CD4-positive, alpha-beta memory T cell (primary cell): ENCODE measurements at regions of chr2 and their contacts with region 1.

Region 1: GRCh38 chr2:176001916-176002687 is at the start of gene LNPK:
- DNase-seq: peak; percentile 88 to 95 (median 92)
- H3K4me3 ChIP-seq: peak within 1 kb of the TSS; percentile 76 to 77
- H3K4me3 Mint-ChIP-seq: peak within 1 kb of the TSS; percentile 81 to 94 (median 90)
- H3K27ac ChIP-seq: peak within 1 kb of the TSS; percentile 74
- H3K27ac Mint-ChIP-seq: peak within 1 kb of the TSS; percentile 61 to 98 (median 91)
- H3K4me1 ChIP-seq: peaks cover 16% of the 10 kb centered on the region
- H3K4me1 Mint-ChIP-seq: peaks cover 12 to 33% (median 17%) of the 10 kb centered on the region in 4 donors
- H3K27me3 ChIP-seq: no peaks in the 10 kb centered on the region
- H3K27me3 Mint-ChIP-seq: no peaks in the 10 kb centered on the region
- total RNA-seq, gene LNPK: 30.4 to 31.3 TPM

Region 2: DNA sequence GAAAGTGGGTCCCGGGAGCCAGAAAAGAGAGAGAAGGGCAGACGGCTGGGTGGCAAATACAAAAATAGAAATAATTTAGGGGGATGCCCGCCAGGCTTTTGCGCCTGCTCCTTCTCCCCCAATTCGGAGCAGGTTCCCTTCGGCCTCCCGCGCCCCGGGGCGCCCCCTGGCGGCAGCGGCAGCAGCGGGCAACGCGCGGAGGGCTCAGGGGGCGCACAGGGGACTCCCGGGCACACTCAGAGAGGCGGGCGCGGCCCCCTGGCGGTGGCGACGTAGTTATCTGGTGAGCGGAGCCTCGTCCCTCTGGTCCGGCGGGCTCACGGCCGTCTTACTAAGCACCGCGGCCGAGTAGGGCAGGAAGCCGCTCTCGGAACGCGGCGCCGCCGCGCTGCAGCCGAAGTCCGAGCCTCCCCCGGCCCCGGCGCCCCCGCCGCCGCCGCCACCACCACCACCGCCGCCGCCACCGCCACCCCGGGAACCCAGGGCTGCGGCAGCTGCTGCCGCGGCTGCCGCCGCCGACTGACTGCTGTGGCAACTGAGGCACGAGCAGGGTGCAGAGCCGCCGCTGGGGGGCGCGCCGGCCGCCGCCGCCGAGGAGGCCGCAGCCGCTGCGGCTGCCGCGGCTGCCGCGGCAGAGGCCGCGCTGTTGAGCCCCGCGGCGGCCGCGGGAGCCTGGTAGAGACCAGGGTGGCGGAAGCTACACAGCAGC is 77.9 kb after region 1 on chr2:
- CTCF ChIA-PET with region 1: no interaction called
- POLR2A ChIA-PET with region 1: no interaction called
- intact Hi-C with region 1: loop called (anchors 5 kb)
- DNase-seq: peak in 1 of 5 donors; percentile 24
- H3K4me3 ChIP-seq: no peak overlapping the region
- H3K4me3 Mint-ChIP-seq: peak overlapping the region in 6 of 8 donors; percentile 64 to 82 (median 72)
- H3K27ac ChIP-seq: no peak overlapping the region
- H3K27ac Mint-ChIP-seq: peak overlapping the region in 4 of 7 donors; percentile 90 to 95 (median 92)
- H3K4me1 ChIP-seq: no peaks in the 10 kb centered on the region
- H3K4me1 Mint-ChIP-seq: peaks cover 3 to 24% (median 9%) of the 10 kb centered on the region in 4 donors
- H3K27me3 ChIP-seq: peaks cover 85% of the 10 kb centered on the region
- H3K27me3 Mint-ChIP-seq: peaks cover 62 to 63% of the 10 kb centered on the region in 2 donors

Region 3: DNA sequence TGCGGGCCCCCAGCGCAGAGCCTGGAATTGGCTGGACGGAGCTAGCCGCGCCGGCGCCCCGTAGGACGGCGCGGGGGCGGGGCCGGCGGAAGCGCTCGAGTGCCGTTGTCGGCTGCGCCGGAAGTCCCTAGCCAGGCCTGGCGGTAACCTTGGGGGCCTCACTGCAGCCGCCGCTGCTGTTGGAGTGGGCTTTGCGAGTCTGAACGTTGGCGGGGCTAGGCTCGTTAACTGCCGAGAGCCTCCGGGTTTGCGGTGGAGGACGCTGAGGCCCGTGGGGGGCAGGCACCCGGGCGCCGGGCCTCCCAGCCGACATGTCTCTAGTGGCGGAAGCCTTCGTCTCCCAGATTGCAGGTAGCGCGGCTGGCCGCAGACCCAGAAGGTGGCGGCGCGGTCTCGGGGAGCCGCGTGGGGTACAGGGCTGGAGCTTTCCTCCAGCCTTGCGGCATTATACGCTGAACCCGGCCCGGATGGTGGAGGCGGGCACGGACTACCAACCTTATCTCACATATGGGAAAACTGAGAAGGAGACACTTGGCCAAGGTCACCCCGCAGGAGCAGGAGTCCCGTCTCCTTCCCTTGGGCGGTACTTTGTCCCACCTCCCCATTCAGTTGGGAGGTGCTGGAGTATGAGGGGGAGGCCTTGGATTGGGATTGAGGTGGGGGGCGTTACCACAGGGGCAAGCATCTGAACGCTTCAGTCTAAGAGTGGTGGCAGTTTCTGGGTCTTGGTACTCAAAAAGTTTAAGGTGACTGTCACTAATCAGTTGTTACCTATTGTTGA is 267.4 kb after region 1 on chr2 and contains the start of gene MTX2:
- CTCF ChIA-PET with region 1: no interaction called
- POLR2A ChIA-PET with region 1: no interaction called
- intact Hi-C with region 1: loop called (anchors 10 kb)
- DNase-seq: peak; percentile 65 to 80 (median 75)
- H3K4me3 ChIP-seq: peak within 1 kb of the TSS; percentile 88 to 93
- H3K4me3 Mint-ChIP-seq: peak within 1 kb of the TSS; percentile 95 to 99 (median 98)
- H3K27ac ChIP-seq: peak within 1 kb of the TSS; percentile 50
- H3K27ac Mint-ChIP-seq: peak within 1 kb of the TSS; percentile 86 to 95 (median 89)
- H3K4me1 ChIP-seq: peaks cover 13% of the 10 kb centered on the region
- H3K4me1 Mint-ChIP-seq: peaks cover 12 to 39% (median 16%) of the 10 kb centered on the region in 4 donors
- H3K27me3 ChIP-seq: no peaks in the 10 kb centered on the region
- H3K27me3 Mint-ChIP-seq: peaks cover 4 to 5% of the 10 kb centered on the region in 2 donors
- total RNA-seq, gene MTX2: 7.6 to 8.1 TPM

Region 4: GRCh38 chr2:177552422-177553175 is 1550.5 kb after region 1 on chr2:
- CTCF ChIA-PET with region 1: no interaction called
- POLR2A ChIA-PET with region 1: no interaction called
- intact Hi-C with region 1: loop called (anchors 5 kb)
- DNase-seq: peak; percentile 94 to 96 (median 96)
- H3K4me3 ChIP-seq: peak overlapping the region; percentile 57 to 90
- H3K4me3 Mint-ChIP-seq: peak overlapping the region; percentile 95 to 99 (median 98)
- H3K27ac ChIP-seq: peak overlapping the region; percentile 97
- H3K27ac Mint-ChIP-seq: peak overlapping the region; percentile 98 to 100 (median 100)
- H3K4me1 ChIP-seq: peaks cover 9% of the 10 kb centered on the region
- H3K4me1 Mint-ChIP-seq: peaks cover 6 to 20% (median 8%) of the 10 kb centered on the region in 4 donors
- H3K27me3 ChIP-seq: no peaks in the 10 kb centered on the region
- H3K27me3 Mint-ChIP-seq: peaks cover 3 to 4% of the 10 kb centered on the region in 2 donors

Region 5: DNA sequence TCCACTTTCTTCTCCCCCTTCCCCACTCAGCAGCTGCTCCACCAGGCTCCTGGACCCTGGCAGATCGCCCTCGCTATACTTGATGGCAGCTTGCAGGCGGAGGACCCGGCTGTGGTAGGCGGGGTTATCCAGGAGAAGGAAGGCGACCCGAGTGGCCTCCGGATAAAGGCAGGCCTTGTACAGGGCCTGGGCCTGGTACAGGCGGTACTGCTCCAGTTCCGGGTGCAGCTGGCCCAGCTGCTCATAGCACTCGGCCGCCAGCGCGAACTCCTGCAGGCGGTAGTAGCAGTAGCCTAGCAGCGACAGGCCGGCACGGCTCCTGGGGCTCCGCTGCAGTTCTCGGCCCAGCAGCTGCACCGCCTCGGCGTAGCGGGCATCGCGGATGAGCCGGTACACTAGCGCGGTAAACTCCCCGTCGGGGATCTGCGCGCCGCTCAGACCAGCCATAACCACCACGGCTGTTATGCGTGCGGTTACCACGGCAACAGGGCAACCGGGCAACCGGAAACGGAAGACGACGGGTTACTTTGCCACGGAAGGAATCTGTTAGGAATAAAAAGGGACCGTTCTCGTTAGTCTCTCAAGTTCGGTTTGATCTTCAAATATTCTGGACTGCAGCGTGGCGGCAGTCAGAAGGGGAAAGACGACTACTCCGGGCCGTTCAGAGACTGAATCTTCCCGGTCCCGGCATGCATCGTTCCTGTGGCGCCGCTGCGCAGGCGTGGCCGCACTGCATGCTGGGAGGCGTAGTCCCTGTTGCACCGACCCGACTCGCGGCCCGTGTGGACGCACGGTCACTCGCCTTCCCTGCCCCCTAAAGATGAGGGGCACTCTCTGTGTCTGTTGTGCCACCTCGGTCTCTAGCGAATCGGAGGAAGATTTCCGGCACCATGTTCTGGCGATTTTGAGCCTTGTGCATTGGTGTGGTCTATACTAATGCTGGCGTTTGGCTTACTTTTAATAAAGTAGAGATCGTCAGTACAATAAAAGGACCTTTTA is 1616.5 kb after region 1 on chr2:
- CTCF ChIA-PET with region 1: no interaction called
- POLR2A ChIA-PET with region 1: no interaction called
- intact Hi-C with region 1: loop called (anchors 5 kb)
- DNase-seq: peak; percentile 92 to 94 (median 93)
- H3K4me3 ChIP-seq: peak overlapping the region; percentile 85 to 87
- H3K4me3 Mint-ChIP-seq: peak overlapping the region; percentile 92 to 98 (median 97)
- H3K27ac ChIP-seq: peak overlapping the region; percentile 97
- H3K27ac Mint-ChIP-seq: peak overlapping the region; percentile 98 to 100 (median 100)
- H3K4me1 ChIP-seq: peaks cover 5% of the 10 kb centered on the region
- H3K4me1 Mint-ChIP-seq: peaks cover 3 to 19% (median 8%) of the 10 kb centered on the region in 4 donors
- H3K27me3 ChIP-seq: no peaks in the 10 kb centered on the region
- H3K27me3 Mint-ChIP-seq: peaks cover 4 to 9% of the 10 kb centered on the region in 2 donors